CD4-positive, alpha-beta memory T cell (primary cell): ENCODE measurements at regions of chr11 and their contacts with region 1.

Region 1: GRCh38 chr11:36289226-36289852 is at the start of gene COMMD9:
- DNase-seq: peak; percentile 89 to 96 (median 91)
- H3K4me3 ChIP-seq: peak within 1 kb of the TSS; percentile 73 to 95
- H3K4me3 Mint-ChIP-seq: peak within 1 kb of the TSS; percentile 88 to 97 (median 95)
- H3K27ac ChIP-seq: peak within 1 kb of the TSS; percentile 31
- H3K27ac Mint-ChIP-seq: peak within 1 kb of the TSS; percentile 65 to 96 (median 93)
- H3K4me1 ChIP-seq: peaks cover 19% of the 10 kb centered on the region
- H3K4me1 Mint-ChIP-seq: peaks cover 25 to 46% (median 37%) of the 10 kb centered on the region in 4 donors
- H3K27me3 ChIP-seq: no peaks in the 10 kb centered on the region
- H3K27me3 Mint-ChIP-seq: no peaks in the 10 kb centered on the region
- total RNA-seq, gene COMMD9: 33.9 to 41.4 TPM

Region 2: DNA sequence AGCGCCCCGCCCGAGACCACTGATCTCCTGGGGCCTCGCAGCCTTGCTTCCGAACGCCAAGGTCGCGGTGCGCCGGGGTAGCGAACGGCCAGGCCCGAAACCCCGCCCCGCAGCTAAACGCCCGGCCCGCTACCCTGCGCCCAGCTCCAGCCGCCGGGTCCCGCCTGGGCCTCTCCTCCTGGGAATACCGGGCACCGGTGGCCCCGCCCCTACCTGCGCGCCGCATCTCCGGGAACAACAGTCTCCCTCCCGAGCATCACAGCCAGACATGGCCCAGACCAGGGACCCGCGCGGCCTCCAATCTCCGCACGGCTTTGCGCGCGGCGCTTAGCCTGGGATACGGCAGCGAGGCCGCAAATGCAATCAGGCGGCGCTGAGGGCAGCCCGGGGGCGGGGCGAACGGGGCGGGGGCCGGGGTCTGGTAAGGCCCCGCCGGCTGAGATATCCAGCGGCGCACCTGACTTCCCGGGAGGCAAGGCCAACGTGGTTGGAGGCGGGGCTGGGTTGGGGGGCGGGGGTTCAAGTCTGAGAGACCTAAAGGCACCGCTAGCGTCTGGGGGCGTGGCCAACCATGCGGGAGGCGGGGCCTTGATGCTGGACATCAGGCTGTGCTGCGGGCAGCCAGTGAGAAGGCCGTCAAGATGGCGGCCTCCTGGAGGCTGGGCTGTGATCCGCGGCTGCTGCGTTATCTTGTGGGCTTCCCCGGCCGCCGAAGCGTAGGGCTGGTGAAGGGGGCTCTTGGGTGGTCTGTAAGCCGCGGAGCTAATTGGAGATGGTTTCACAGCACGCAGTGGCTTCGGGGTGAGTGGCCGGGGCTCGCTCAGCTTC is 1373.1 kb before region 1 on chr11 and contains the starts of genes APIP and PDHX:
- CTCF ChIA-PET with region 1: no interaction called
- POLR2A ChIA-PET with region 1: no interaction called
- intact Hi-C with region 1: loop called (anchors 5 kb)
- DNase-seq: peak; percentile 83 to 95 (median 85)
- H3K4me3 ChIP-seq: peak within 1 kb of the TSS; percentile 93 to 95
- H3K4me3 Mint-ChIP-seq: peak within 1 kb of the TSS; percentile 90 to 100 (median 96)
- H3K27ac ChIP-seq: peak within 1 kb of the TSS; percentile 81
- H3K27ac Mint-ChIP-seq: peak within 1 kb of the TSS; percentile 95 to 99 (median 97)
- H3K4me1 ChIP-seq: peaks cover 29% of the 10 kb centered on the region
- H3K4me1 Mint-ChIP-seq: peaks cover 31 to 55% (median 40%) of the 10 kb centered on the region in 4 donors
- H3K27me3 ChIP-seq: no peaks in the 10 kb centered on the region
- H3K27me3 Mint-ChIP-seq: no peaks in the 10 kb centered on the region
- total RNA-seq, gene APIP: 17.7 to 18.4 TPM
- total RNA-seq, gene PDHX: 39.1 to 43.5 TPM

Region 3: DNA sequence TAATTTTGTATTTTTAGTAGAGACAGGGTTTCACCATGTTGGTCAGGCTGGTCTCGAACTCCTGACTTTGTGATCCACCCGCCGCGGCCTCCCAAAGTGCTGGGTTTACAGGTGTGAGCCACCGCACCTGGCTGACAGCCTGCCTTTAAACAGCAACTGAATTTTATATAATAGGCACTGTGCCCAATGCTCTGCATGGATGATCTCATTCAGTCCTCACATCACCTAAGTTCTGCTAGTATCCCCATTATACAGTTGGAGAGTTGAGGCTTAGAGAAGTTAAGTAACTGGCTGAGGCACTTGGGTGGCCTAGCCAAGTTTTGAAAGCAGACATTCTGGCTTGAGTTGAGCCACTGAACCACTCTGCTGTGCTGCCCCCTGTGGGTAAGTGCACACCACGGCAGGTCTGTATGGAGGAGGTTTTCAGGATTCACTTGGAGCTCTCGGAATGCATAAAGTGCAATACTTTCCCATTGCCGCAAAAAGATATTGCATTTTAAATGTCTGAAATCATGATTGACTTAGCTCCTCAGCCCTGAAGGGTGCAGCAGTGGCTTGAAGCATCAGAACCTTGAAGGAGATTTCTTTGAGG is 233.1 kb before region 1 on chr11:
- CTCF ChIA-PET with region 1: no interaction called
- POLR2A ChIA-PET with region 1: no interaction called
- intact Hi-C with region 1: no loop called
- DNase-seq: no peak
- H3K4me3 ChIP-seq: no peak overlapping the region
- H3K4me3 Mint-ChIP-seq: no peak overlapping the region
- H3K27ac ChIP-seq: no peak overlapping the region
- H3K27ac Mint-ChIP-seq: no peak overlapping the region
- H3K4me1 ChIP-seq: no peaks in the 10 kb centered on the region
- H3K4me1 Mint-ChIP-seq: no peaks in the 10 kb centered on the region
- H3K27me3 ChIP-seq: no peaks in the 10 kb centered on the region
- H3K27me3 Mint-ChIP-seq: peaks cover 6 to 11% of the 10 kb centered on the region in 2 donors

Region 4: GRCh38 chr11:36271794-36272407 is 17.4 kb before region 1 on chr11:
- CTCF ChIA-PET with region 1: interaction called, 10 read pairs
- POLR2A ChIA-PET with region 1: no interaction called
- intact Hi-C with region 1: no loop called
- DNase-seq: no peak
- H3K4me3 ChIP-seq: no peak overlapping the region
- H3K4me3 Mint-ChIP-seq: no peak overlapping the region
- H3K27ac ChIP-seq: no peak overlapping the region
- H3K27ac Mint-ChIP-seq: no peak overlapping the region
- H3K4me1 ChIP-seq: no peaks in the 10 kb centered on the region
- H3K4me1 Mint-ChIP-seq: no peaks in the 10 kb centered on the region
- H3K27me3 ChIP-seq: no peaks in the 10 kb centered on the region
- H3K27me3 Mint-ChIP-seq: no peaks in the 10 kb centered on the region

Region 5: DNA sequence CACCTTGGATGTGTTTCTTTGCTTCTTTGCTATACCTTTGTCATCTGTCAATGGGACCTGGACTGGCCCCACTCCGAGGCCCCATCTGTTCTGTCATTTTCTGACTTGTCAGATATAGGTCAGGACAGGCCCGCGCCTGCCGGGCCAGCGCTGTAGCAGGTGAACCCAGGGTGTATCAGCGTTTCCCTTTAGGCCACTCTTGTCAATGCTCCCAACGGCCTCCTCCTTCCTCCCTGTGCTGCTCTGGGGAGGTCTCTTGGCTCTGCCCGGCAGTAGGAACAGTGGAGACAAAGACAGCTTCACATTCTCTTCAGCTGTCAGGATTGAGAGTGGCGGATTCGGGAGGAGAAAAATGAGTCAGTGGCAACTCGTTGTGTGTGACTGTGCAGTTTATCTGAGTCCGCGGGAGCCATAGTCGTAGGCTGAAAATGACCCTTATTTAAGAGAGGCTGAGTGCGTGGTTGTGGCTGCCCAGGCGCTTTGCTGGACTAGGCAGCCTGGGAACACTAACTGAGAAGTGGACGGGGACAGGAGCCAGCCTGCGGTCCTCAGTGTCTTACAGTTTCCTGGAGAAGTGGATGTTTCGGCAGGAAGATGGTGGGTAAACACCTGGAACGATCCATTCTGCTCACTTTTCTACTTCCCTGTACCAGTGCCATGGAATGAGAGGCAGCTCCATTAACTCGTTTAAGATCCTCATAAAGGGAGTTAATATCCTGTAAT is 109.1 kb after region 1 on chr11:
- CTCF ChIA-PET with region 1: no interaction called
- POLR2A ChIA-PET with region 1: no interaction called
- intact Hi-C with region 1: no loop called
- DNase-seq: no peak
- H3K4me3 ChIP-seq: no peak overlapping the region
- H3K4me3 Mint-ChIP-seq: no peak overlapping the region
- H3K27ac ChIP-seq: no peak overlapping the region
- H3K27ac Mint-ChIP-seq: peak overlapping the region in 3 of 7 donors; percentile 21 to 37 (median 23)
- H3K4me1 ChIP-seq: peaks cover 47% of the 10 kb centered on the region
- H3K4me1 Mint-ChIP-seq: peaks cover 22 to 54% (median 39%) of the 10 kb centered on the region in 4 donors
- H3K27me3 ChIP-seq: no peaks in the 10 kb centered on the region
- H3K27me3 Mint-ChIP-seq: no peaks in the 10 kb centered on the region

Region 6: GRCh38 chr11:36478700-36479329 is 189.5 kb after region 1 on chr11:
- CTCF ChIA-PET with region 1: interaction called, 139 read pairs
- POLR2A ChIA-PET with region 1: interaction called, 9 read pairs
- intact Hi-C with region 1: loop called (anchors 1 kb)
- DNase-seq: peak in 4 of 5 donors; percentile 34 to 43 (median 40)
- H3K4me3 ChIP-seq: no peak overlapping the region
- H3K4me3 Mint-ChIP-seq: no peak overlapping the region
- H3K27ac ChIP-seq: no peak overlapping the region
- H3K27ac Mint-ChIP-seq: peak overlapping the region in 1 of 7 donors; percentile 10
- H3K4me1 ChIP-seq: no peaks in the 10 kb centered on the region
- H3K4me1 Mint-ChIP-seq: peaks cover 3 to 8% (median 6%) of the 10 kb centered on the region in 4 donors
- H3K27me3 ChIP-seq: no peaks in the 10 kb centered on the region
- H3K27me3 Mint-ChIP-seq: no peaks in the 10 kb centered on the region

Region 7: DNA sequence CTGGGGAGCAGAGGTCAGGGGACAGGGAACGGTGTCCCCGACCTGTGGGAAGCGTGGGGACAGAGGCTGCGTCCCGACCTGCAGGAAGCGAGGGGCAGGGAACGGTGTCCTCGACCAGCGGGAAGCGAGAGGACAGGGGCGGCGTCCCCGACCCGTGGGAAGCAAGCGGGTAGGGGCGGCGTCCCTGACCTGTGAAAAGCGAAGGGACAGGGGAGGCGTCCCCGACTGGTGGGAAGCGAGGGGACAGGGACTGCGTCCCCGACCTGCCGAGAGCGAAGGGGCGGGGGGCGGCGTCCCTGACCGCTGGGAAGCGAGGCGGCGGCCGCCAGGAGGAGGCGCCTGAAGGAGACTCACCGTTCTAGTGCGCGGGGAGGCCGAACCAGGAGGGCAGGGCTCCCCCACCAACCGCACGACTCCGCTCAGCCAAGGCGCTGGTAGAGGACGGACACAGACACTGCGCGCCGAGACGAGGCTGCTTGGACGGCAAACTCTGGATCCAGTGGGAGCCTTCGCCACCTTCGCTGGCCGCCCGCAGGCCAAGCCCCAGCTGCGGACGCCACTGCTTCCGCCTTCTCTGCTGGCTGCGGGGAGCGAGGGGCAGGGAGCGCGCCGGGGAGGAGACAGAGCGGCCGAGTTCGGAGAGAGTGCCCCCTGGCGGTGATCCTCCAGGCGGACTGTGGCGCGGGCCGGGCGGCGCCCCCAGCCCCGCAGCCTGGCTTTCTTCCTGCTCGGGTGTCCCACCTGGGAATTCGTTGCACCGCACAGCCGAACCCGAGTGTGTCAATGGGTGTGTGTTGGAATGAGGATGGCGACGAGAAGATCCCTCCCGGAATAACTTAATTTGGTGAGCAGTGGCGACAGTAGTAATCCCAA is 220.6 kb after region 1 on chr11 and contains the start of gene TRAF6:
- CTCF ChIA-PET with region 1: interaction called, 13 read pairs
- POLR2A ChIA-PET with region 1: interaction called, 9 read pairs
- intact Hi-C with region 1: loop called (anchors 1 kb)
- DNase-seq: peak; percentile 82 to 88 (median 86)
- H3K4me3 ChIP-seq: peak within 1 kb of the TSS; percentile 63 to 96
- H3K4me3 Mint-ChIP-seq: peak within 1 kb of the TSS; percentile 94 to 99 (median 98)
- H3K27ac ChIP-seq: peak within 1 kb of the TSS; percentile 78
- H3K27ac Mint-ChIP-seq: peak within 1 kb of the TSS; percentile 93 to 98 (median 96)
- H3K4me1 ChIP-seq: peaks cover 35% of the 10 kb centered on the region
- H3K4me1 Mint-ChIP-seq: peaks cover 27 to 44% (median 31%) of the 10 kb centered on the region in 4 donors
- H3K27me3 ChIP-seq: peaks cover 4% of the 10 kb centered on the region
- H3K27me3 Mint-ChIP-seq: peaks cover 0 to 4% of the 10 kb centered on the region in 2 donors
- total RNA-seq, gene TRAF6: 22.0 to 23.7 TPM